A673 (cell line): ENCODE measurements at regions of chr21 and their contacts with region 1.

Region 1: GRCh38 chr21:14737922-14738321 is 191.8 kb upstream of the SAMSN1 start:
- DNase-seq: peak; percentile 69
- H3K4me3 ChIP-seq: no peak overlapping the region
- H3K27ac ChIP-seq: no peak overlapping the region
- H3K4me1 ChIP-seq: no peaks in the 10 kb centered on the region
- H3K27me3 ChIP-seq: no peaks in the 10 kb centered on the region
- CTCF ChIP-seq: peak; percentile 84

Region 2: DNA sequence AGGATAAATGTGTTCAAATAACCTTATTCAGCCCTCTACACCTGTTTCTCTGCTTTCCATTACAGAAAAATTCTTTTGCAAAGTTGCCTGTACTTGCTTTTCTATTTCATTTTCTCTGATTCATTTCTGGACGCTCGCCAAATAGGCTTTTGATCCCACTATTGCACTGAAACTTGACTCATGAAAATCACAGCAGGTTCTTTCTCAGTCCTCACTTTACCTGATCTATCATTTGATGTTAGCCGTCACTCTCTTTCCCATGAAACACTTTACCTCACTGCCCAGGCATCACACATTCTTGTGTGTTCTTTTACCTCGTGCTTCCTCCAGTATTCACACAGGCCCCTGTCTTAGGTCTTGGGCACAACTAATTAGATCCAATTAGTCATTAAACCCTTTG is 381.2 kb before region 1 on chr21:
- CTCF ChIA-PET with region 1: no interaction called
- POLR2A ChIA-PET with region 1: no interaction called
- intact Hi-C with region 1: no loop called
- DNase-seq: peak; percentile 18
- H3K4me3 ChIP-seq: no peak overlapping the region
- H3K27ac ChIP-seq: no peak overlapping the region
- H3K4me1 ChIP-seq: peaks cover 32% of the 10 kb centered on the region
- H3K27me3 ChIP-seq: no peaks in the 10 kb centered on the region
- CTCF ChIP-seq: no peak

Region 3: GRCh38 chr21:14448784-14449183 is 289.1 kb before region 1 on chr21:
- CTCF ChIA-PET with region 1: no interaction called
- POLR2A ChIA-PET with region 1: no interaction called
- intact Hi-C with region 1: loop called (anchors 10 kb)
- DNase-seq: no peak
- H3K4me3 ChIP-seq: no peak overlapping the region
- H3K27ac ChIP-seq: no peak overlapping the region
- H3K4me1 ChIP-seq: no peaks in the 10 kb centered on the region
- H3K27me3 ChIP-seq: no peaks in the 10 kb centered on the region
- CTCF ChIP-seq: no peak

Region 4: GRCh38 chr21:14541841-14542490 is 196.0 kb before region 1 on chr21:
- CTCF ChIA-PET with region 1: no interaction called
- POLR2A ChIA-PET with region 1: no interaction called
- intact Hi-C with region 1: no loop called
- DNase-seq: no peak
- H3K4me3 ChIP-seq: no peak overlapping the region
- H3K27ac ChIP-seq: no peak overlapping the region
- H3K4me1 ChIP-seq: no peaks in the 10 kb centered on the region
- H3K27me3 ChIP-seq: no peaks in the 10 kb centered on the region
- CTCF ChIP-seq: no peak

Region 5: GRCh38 chr21:14825514-14825974 is 87.6 kb after region 1 on chr21:
- CTCF ChIA-PET with region 1: no interaction called
- POLR2A ChIA-PET with region 1: no interaction called
- intact Hi-C with region 1: no loop called
- DNase-seq: no peak
- H3K4me3 ChIP-seq: no peak overlapping the region
- H3K27ac ChIP-seq: no peak overlapping the region
- H3K4me1 ChIP-seq: no peaks in the 10 kb centered on the region
- H3K27me3 ChIP-seq: no peaks in the 10 kb centered on the region
- CTCF ChIP-seq: no peak